ENCODE measurements at regions of chr21 and their contacts with region 1.

Region 1: DNA sequence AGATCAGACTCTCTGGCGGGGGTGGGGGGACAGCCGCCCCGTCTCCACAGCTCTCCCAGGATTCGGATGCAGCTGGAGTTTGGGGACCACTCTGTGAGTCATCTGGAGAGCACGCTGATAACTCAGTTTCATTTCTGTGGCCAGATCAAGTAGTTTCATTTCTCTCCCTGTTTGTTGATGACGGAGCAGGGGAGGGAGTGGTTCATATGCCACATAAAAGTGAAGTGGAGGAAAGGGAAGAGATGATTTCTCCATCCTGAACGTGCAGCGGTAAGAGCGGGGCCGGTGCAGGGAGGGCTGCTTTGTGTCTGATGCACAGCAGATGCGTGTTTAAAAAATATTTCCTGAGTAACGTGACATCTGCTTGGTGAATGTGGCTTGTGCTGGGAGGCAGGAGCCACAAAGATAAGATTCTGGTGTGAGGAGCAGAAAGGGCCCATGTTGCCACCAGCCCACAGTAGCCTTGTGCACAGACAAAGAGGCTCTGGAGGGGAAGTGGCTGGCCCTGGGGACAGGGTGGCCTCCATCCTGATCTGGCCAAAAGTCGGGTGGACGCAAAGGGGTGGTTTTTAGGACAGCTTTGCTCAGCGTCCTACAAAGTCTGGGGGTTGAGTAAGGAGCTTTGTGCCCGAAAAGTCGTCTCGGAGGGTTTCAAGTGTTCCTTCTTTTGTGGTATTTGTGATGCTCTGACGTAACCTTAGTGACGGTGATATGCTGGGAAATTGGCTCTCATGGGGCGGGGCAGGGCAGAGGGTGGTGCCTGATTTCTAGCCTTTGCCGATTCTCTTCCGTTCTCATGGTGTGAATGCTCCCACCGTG is at the start of gene MX2:
- DNase-seq: peak; percentile 60 to 97 (median 83)
- ATAC-seq: peak; percentile 75
- H3K4me3 ChIP-seq: peak within 1 kb of the TSS; percentile 74 to 79
- H3K4me3 Mint-ChIP-seq: peak within 1 kb of the TSS; percentile 89
- H3K27ac ChIP-seq: peak within 1 kb of the TSS; percentile 98 to 99
- H3K27ac Mint-ChIP-seq: peak within 1 kb of the TSS; percentile 100
- H3K4me1 ChIP-seq: peaks cover 24% of the 10 kb centered on the region
- H3K4me1 Mint-ChIP-seq: peaks cover 56% of the 10 kb centered on the region
- H3K27me3 ChIP-seq: no peaks in the 10 kb centered on the region
- H3K27me3 Mint-ChIP-seq: no peaks in the 10 kb centered on the region
- CTCF ChIP-seq: no peak
- total RNA-seq, gene MX2: 58.5 to 61.5 TPM

Region 2: GRCh38 chr21:41374867-41375533 is 13.0 kb after region 1 on chr21:
- CTCF ChIA-PET with region 1: interaction called, 7 read pairs
- POLR2A ChIA-PET with region 1: interaction called, 16 read pairs
- intact Hi-C with region 1: no loop called
- DNase-seq: no peak
- ATAC-seq: no peak
- H3K4me3 ChIP-seq: no peak overlapping the region
- H3K4me3 Mint-ChIP-seq: no peak overlapping the region
- H3K27ac ChIP-seq: no peak overlapping the region
- H3K27ac Mint-ChIP-seq: peak overlapping the region; percentile 52
- H3K4me1 ChIP-seq: peaks cover 34% of the 10 kb centered on the region
- H3K4me1 Mint-ChIP-seq: peaks cover 41% of the 10 kb centered on the region
- H3K27me3 ChIP-seq: no peaks in the 10 kb centered on the region
- H3K27me3 Mint-ChIP-seq: no peaks in the 10 kb centered on the region
- CTCF ChIP-seq: no peak

Region 3: GRCh38 chr21:41425954-41426675 is 64.1 kb after region 1 on chr21 and contains the start of gene MX1:
- CTCF ChIA-PET with region 1: no interaction called
- POLR2A ChIA-PET with region 1: interaction called, 19 read pairs
- intact Hi-C with region 1: loop called (anchors 1 to 2 kb)
- DNase-seq: peak; percentile 73 to 97 (median 87)
- ATAC-seq: peak; percentile 99
- H3K4me3 ChIP-seq: peak within 1 kb of the TSS; percentile 74 to 94
- H3K4me3 Mint-ChIP-seq: peak within 1 kb of the TSS; percentile 97
- H3K27ac ChIP-seq: peak within 1 kb of the TSS; percentile 72 to 79
- H3K27ac Mint-ChIP-seq: peak within 1 kb of the TSS; percentile 96
- H3K4me1 ChIP-seq: peaks cover 14% of the 10 kb centered on the region
- H3K4me1 Mint-ChIP-seq: peaks cover 40% of the 10 kb centered on the region
- H3K27me3 ChIP-seq: no peaks in the 10 kb centered on the region
- H3K27me3 Mint-ChIP-seq: no peaks in the 10 kb centered on the region
- CTCF ChIP-seq: no peak
- total RNA-seq, gene MX1: 69.1 to 71.0 TPM

Region 4: DNA sequence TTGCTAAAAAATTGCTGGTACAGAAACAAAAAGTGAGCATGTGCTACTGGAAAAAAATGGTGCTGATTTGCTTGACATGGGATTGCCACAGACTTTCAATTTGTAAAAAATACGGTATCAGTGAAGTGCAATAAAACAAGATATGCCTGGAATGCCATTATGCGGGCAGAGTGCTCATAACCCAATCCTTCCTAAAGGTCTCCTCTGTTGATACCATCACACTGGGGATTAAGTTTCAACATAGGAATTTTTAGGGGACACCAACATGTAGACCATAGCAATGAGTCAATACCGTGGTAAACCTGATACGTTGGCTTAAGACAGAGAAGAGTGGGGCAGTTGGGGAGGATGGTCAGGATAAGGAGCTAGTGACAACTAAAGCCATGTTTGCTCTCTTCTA is 84.6 kb after region 1 on chr21:
- CTCF ChIA-PET with region 1: no interaction called
- POLR2A ChIA-PET with region 1: no interaction called
- intact Hi-C with region 1: no loop called
- DNase-seq: no peak
- ATAC-seq: no peak
- H3K4me3 ChIP-seq: no peak overlapping the region
- H3K4me3 Mint-ChIP-seq: no peak overlapping the region
- H3K27ac ChIP-seq: no peak overlapping the region
- H3K27ac Mint-ChIP-seq: no peak overlapping the region
- H3K4me1 ChIP-seq: no peaks in the 10 kb centered on the region
- H3K4me1 Mint-ChIP-seq: no peaks in the 10 kb centered on the region
- H3K27me3 ChIP-seq: no peaks in the 10 kb centered on the region
- H3K27me3 Mint-ChIP-seq: no peaks in the 10 kb centered on the region
- CTCF ChIP-seq: no peak